Upper lobe of right lung (tissue), 1 donor: ENCODE measurements at regions of chr6 and their contacts with region 1.

Region 1: DNA sequence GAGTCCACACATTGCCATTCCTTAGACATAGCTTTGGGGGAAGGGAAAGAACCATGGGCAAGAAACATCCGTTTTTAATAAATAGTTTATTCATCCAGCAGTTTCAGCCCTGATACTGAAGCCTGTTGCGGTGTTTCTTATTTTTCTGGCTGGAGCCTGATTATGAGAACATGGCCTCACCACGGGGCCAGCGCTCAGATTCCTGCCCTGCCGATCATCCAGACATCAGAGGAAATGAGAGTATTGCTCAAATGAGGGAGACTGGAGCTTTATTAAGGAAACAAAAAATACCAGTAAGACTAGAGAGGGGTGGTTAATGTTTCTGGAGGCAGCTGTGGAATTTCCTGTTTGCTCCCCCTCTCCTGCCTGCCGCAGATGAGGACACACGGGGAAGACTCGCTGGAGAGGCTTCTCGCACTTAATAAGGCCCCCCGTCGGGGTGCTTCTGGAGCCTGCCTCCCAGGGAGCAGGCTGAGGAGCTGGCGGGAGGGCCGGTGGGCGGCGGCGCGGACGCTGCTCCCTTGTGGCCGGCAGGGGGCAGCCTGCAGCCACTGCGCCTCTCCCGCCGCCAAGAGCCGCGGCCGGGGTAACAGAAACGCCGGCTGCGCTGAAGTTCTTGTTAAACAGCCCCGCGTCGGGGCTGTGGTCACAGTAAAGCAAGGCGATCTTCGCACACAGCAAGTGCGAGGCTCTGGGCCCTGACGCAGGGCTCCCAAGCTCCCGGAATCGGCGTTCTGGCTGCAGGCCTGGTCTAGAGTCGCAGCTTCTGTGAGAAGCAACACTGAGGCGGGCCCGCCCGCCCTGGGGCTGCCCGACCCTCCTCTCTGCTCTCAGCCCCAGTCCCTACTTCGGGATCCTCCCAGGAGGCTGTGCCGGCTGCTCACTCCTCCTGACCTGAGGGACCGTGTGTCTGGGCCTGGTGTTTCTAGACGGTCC is 17.5 kb downstream of the LEMD2 start:
- DNase-seq: peak; percentile 87
- ATAC-seq: peak; percentile 89
- H3K4me3 ChIP-seq: no peak overlapping the region
- H3K27ac ChIP-seq: peak overlapping the region; percentile 81
- H3K4me1 ChIP-seq: peaks cover 34% of the 10 kb centered on the region
- H3K27me3 ChIP-seq: no peaks in the 10 kb centered on the region
- CTCF ChIP-seq: peak; percentile 98

Region 2: GRCh38 chr6:34027445-34027936 is 256.1 kb after region 1 on chr6:
- intact Hi-C with region 1: loop called (anchors 5 kb)
- DNase-seq: peak; percentile 75
- ATAC-seq: peak; percentile 59
- H3K4me3 ChIP-seq: no peak overlapping the region
- H3K27ac ChIP-seq: no peak overlapping the region
- H3K4me1 ChIP-seq: no peaks in the 10 kb centered on the region
- H3K27me3 ChIP-seq: peaks cover 2% of the 10 kb centered on the region
- CTCF ChIP-seq: peak; percentile 78

Region 3: GRCh38 chr6:34067814-34068213 is 296.4 kb after region 1 on chr6:
- intact Hi-C with region 1: no loop called
- DNase-seq: no peak
- ATAC-seq: no peak
- H3K4me3 ChIP-seq: no peak overlapping the region
- H3K27ac ChIP-seq: no peak overlapping the region
- H3K4me1 ChIP-seq: peaks cover 3% of the 10 kb centered on the region
- H3K27me3 ChIP-seq: peaks cover 18% of the 10 kb centered on the region
- CTCF ChIP-seq: no peak

Region 4: DNA sequence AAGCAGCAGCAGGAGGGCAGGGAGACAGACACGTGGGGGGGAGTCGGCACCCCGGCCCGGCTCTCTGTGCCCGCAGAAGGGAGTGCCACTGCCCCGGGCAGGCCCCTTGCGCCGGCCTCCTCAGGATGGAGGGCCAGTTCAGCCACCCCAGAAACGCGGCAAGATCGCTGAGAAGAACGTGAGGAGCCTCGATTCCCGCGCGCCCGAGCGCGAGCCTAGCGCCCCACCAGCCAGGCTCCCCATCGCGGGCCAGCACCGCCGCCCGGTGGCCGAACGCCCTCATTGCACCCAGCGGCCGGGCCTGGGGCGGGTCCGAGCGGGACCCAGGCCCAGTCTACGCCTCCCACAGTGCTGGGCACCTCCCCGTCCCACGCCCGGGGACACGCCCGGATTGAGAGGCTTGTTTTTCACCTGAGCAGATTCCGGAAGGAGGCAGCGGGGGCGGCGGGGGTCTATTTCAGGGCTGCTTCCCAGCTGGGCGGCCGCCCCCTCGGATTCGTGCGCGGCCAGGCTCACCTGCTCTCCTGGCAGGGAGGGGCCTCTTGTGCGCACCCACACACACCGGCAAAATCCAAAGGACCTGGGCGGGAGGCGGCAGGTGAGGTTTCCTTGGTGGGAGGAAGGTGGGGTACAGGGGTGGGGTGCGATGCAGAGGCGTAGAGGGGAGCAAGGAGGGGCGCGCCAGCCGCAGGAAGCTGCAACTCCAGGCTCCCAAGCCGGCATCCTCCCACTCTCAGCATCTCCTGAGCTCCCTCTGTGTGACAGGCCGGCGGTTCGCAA is 383.4 kb after region 1 on chr6:
- intact Hi-C with region 1: loop called (anchors 10 kb)
- DNase-seq: peak; percentile 78
- ATAC-seq: peak; percentile 87
- H3K4me3 ChIP-seq: no peak overlapping the region
- H3K27ac ChIP-seq: no peak overlapping the region
- H3K4me1 ChIP-seq: peaks cover 7% of the 10 kb centered on the region
- H3K27me3 ChIP-seq: peaks cover 46% of the 10 kb centered on the region
- CTCF ChIP-seq: peak; percentile 98